Activated T-helper 1 cell treated with anti-CD3 and anti-CD28 coated beads, Interleukin-12 subunit alpha, Interleukin-12 subunit beta, Interleukin-2, Interleukin-4 antibody, amounts not matched to agents 30 ng/mL and 10 ng/mL and 1 ng/mL, durations not matched to agents 14 hours and 24 hours and 36 hours (primary cell): ENCODE measurements at regions of chr7 and their contacts with region 1.

Region 1: DNA sequence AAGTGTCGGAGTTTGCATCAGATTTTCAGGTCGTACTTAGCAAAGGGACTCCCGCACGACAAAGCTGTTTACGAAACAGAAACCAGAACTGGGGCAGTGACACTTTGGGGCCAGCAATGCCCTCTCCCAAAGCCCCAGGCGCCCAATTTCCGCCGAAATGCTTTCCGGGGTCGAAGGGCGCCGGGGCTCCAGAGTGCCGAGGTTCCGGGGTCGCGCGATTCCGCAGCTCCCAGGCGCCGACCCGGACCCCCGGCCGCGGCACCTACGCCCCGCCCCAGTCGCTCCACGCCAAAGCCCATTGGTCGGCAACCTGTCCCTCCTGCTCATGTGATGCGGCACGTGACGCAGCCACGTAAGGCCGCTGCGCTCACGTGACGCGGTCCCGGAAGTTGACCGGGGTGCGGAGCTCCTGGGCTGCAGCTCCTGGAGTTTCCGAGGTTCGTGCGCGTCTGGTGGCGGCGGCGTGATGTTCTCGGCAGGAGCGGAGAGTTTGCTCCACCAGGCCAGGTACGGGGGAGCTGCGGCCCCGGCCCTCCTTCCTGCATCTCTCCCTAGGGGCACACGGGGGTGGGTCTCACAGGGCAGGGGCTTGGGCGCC is at the start of gene AP5Z1:
- DNase-seq: peak; percentile 90
- H3K4me3 Mint-ChIP-seq: peak within 1 kb of the TSS; percentile 98
- H3K27ac Mint-ChIP-seq: peak within 1 kb of the TSS; percentile 95
- H3K4me1 Mint-ChIP-seq: peaks cover 45% of the 10 kb centered on the region
- H3K27me3 Mint-ChIP-seq: no peaks in the 10 kb centered on the region
- total RNA-seq, gene AP5Z1: 55.9 and 56.8 TPM in 2 replicates

Region 2: GRCh38 chr7:4641667-4642467 is 133.5 kb before region 1 on chr7:
- intact Hi-C with region 1: loop called (anchors 1 kb)
- DNase-seq: peak; percentile 96
- H3K4me3 Mint-ChIP-seq: peak overlapping the region; percentile 93
- H3K27ac Mint-ChIP-seq: peak overlapping the region; percentile 86
- H3K4me1 Mint-ChIP-seq: peaks cover 19% of the 10 kb centered on the region
- H3K27me3 Mint-ChIP-seq: no peaks in the 10 kb centered on the region

Region 3: GRCh38 chr7:4744391-4745264 is 30.7 kb before region 1 on chr7:
- intact Hi-C with region 1: loop called (anchors 1 kb)
- DNase-seq: peak; percentile 73
- H3K4me3 Mint-ChIP-seq: peak overlapping the region; percentile 83
- H3K27ac Mint-ChIP-seq: peak overlapping the region; percentile 93
- H3K4me1 Mint-ChIP-seq: peaks cover 67% of the 10 kb centered on the region
- H3K27me3 Mint-ChIP-seq: no peaks in the 10 kb centered on the region

Region 4: GRCh38 chr7:4791738-4792536 is 16.6 kb after region 1 on chr7:
- intact Hi-C with region 1: loop called (anchors 1 kb)
- DNase-seq: peak; percentile 70
- H3K4me3 Mint-ChIP-seq: no peak overlapping the region
- H3K27ac Mint-ChIP-seq: no peak overlapping the region
- H3K4me1 Mint-ChIP-seq: no peaks in the 10 kb centered on the region
- H3K27me3 Mint-ChIP-seq: no peaks in the 10 kb centered on the region

Region 5: GRCh38 chr7:5045558-5046396 is 270.4 kb after region 1 on chr7 and contains the start of gene RBAK:
- intact Hi-C with region 1: loop called (anchors 1 kb)
- DNase-seq: peak; percentile 87
- H3K4me3 Mint-ChIP-seq: peak within 1 kb of the TSS; percentile 89
- H3K27ac Mint-ChIP-seq: peak within 1 kb of the TSS; percentile 88
- H3K4me1 Mint-ChIP-seq: peaks cover 24% of the 10 kb centered on the region
- H3K27me3 Mint-ChIP-seq: no peaks in the 10 kb centered on the region
- total RNA-seq, gene RBAK: 12.5 and 13.0 TPM in 2 replicates